Transverse colon (tissue), 4 donors: ENCODE measurements at regions of chr11 and their contacts with region 1.

Region 1: DNA sequence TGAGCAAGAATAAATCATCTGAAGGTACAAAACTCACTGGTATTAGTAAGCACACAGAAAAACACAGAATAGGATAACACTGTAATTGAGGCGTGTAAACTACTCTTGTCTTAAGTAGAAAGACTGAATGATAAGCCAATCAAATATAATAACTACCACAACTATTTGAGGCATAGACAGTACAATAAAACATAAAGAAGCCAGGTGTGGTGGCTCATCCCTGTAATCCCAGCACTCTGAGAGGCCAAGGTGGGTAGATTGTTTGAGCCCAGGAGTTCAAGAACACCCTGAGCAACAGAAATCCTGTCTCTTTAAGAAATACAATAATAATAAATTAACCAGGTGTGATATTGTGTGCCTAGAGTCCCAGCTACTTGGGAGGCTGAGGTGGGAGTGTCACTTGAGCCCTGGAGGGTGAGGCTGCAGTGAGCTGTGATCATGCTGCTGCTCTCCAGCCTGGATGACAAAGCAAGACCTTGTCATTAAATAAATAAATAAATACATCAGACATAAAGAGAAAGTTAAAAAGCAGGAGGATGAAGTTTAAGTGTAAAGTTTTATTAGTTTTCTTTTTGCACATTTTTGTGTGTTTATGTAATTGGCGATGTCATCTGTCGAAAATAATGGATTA is 390.6 kb downstream of the DYNC2H1 start:
- DNase-seq: no peak
- H3K4me3 ChIP-seq: no peak overlapping the region
- H3K27ac ChIP-seq: no peak overlapping the region
- H3K4me1 ChIP-seq: no peaks in the 10 kb centered on the region
- H3K27me3 ChIP-seq: no peaks in the 10 kb centered on the region
- CTCF ChIP-seq: no peak
- EP300 ChIP-seq: no peak
- POLR2A ChIP-seq: no peak

Region 2: GRCh38 chr11:103486604-103487003 is 13.2 kb before region 1 on chr11:
- in situ Hi-C with region 1: no loop called
- intact Hi-C with region 1: loop called (anchors 1 kb)
- DNase-seq: no peak
- H3K4me3 ChIP-seq: no peak overlapping the region
- H3K27ac ChIP-seq: no peak overlapping the region
- H3K4me1 ChIP-seq: no peaks in the 10 kb centered on the region
- H3K27me3 ChIP-seq: no peaks in the 10 kb centered on the region
- CTCF ChIP-seq: no peak
- EP300 ChIP-seq: no peak
- POLR2A ChIP-seq: no peak